OCI-LY7 (cell line): ENCODE measurements at regions of chr3 and their contacts with region 1.

Region 1: GRCh38 chr3:27712136-27713077 is 9.7 kb downstream of the EOMES start:
- DNase-seq: peak; percentile 38
- H3K4me3 ChIP-seq: no peak overlapping the region
- H3K27ac ChIP-seq: no peak overlapping the region
- H3K4me1 ChIP-seq: no peaks in the 10 kb centered on the region
- CTCF ChIP-seq: peak; percentile 72

Region 2: DNA sequence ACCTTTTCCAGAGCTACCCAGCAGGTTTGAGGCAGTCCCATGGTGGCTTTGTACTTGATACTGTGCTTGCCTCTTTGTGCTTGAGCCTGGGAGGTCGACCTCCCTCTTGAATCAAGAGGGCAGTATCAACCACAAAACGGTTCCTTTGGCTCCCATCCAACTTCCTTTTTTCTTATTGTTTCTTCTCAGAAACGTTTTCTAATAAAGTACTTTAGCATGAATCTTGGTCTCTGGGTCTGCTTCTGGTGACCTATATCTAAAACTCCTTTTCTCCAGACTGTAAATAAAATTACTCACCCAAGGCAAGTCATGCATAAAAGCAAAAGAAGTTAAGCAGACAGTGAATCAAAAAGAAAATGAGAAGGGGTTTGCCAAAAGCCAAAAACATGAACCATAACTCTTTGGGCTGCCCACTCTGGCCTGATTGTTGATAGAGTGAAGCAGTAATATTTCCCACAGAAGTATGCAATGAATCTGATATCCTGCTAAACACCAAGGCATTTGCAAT is 116.0 kb before region 1 on chr3:
- CTCF ChIA-PET with region 1: no interaction called
- POLR2A ChIA-PET with region 1: no interaction called
- intact Hi-C with region 1: no loop called
- DNase-seq: peak; percentile 2
- H3K4me3 ChIP-seq: no peak overlapping the region
- H3K27ac ChIP-seq: no peak overlapping the region
- H3K4me1 ChIP-seq: no peaks in the 10 kb centered on the region
- CTCF ChIP-seq: no peak

Region 3: DNA sequence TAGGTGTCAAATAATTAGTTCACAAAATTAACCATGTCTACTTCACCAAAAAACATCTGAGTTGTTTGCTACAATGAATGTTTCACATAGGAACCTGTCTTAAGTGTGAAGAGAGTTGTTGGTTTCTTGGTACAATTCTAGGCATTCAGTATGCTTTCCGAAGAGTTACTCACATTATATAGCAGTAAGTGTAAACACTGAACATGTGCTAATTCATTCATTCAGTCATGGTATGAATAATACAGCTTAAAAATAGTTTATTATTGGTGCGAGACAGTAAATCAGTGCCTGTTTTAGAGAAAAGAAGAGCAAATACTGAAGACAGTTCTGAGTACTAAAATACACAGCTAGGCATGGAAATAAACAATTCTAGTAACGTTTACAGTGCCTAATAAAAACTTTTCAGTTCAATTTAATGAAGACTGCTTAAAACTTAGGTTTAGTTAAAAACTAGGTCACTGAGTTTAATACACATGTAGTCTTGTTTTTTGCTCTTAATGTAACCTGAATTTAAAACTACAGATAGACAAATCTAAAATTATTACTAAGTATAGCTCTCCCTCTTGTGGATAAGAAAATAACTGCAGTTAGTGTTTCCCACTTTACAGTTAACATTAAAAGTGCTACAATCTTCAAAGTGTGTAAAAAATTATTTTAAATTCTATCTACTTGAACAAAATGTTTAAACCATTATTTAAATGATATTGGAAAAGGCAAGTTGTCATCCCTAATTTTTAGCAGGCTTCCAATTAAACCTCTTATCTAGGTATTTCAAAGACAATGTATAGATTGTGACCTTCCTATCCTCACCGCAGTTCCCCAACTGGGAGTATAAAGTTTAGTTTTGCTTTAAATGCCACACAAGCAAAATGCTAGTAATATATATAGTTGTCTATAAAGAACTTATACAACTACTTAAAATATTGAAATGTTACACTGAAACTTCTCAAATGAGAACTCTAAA is 616.1 kb after region 1 on chr3:
- CTCF ChIA-PET with region 1: no interaction called
- POLR2A ChIA-PET with region 1: interaction called, 3 read pairs
- intact Hi-C with region 1: loop called (anchors 5 kb)
- DNase-seq: peak; percentile 42
- H3K4me3 ChIP-seq: no peak overlapping the region
- H3K27ac ChIP-seq: no peak overlapping the region
- H3K4me1 ChIP-seq: no peaks in the 10 kb centered on the region
- CTCF ChIP-seq: peak; percentile 91